Activated CD4-positive, alpha-beta T cell treated with anti-CD3 and anti-CD28 coated beads, Interleukin-2, amount 10 ng/mL, durations not matched to agents 7 days and 5 days (primary cell): ENCODE measurements at regions of chr19 and their contacts with region 1.

Region 1: GRCh38 chr19:17282488-17283255 is 971 bp downstream of the ANKLE1 start:
- DNase-seq: peak; percentile 79
- H3K4me3 Mint-ChIP-seq: peak overlapping the region; percentile 72
- H3K27ac Mint-ChIP-seq: no peak overlapping the region
- H3K4me1 Mint-ChIP-seq: peaks cover 13% of the 10 kb centered on the region
- H3K27me3 Mint-ChIP-seq: peaks cover 2% of the 10 kb centered on the region

Region 2: DNA sequence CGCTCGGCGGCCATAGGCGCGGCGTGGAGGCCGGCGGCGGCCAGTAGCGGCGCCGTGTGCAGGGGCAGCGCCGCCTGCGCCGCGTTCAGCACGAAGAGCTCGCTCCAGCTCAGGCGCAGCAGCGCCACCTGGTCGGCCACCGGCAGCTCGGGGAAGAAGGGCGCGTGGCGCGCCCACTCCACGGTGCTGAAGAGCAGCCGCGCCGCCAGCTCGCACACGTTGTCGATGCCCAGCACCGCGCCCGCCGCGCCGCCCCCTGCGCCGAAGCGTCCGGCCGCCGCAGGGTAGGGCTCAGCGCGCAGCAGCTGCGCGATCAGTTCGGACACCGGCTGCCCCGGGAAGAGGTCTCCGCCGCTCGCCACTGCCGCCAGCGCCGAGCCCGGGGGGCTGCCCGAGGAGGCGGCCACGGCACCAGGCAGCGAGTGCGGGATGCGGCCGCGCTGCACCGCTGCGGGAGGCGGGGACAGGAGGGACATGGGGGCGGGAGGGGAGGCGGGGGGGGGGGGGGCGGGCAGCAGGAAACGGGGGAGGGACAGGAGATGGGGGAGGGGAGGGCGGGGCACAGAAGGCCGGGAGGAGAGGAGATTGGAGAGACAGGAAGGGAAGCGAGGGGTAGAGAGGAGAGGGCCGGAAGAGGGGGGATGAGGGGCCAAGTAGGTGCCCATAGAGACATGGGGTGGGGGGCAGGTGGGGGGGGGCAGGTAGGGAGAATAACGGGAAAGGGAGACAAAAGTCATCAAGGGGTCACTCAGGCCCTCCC is 46.9 kb before region 1 on chr19:
- CTCF ChIA-PET with region 1: interaction called, 12 read pairs
- POLR2A ChIA-PET with region 1: interaction called, 6 read pairs
- DNase-seq: peak; percentile 77
- H3K4me3 Mint-ChIP-seq: peak overlapping the region; percentile 76
- H3K27ac Mint-ChIP-seq: peak overlapping the region; percentile 80
- H3K4me1 Mint-ChIP-seq: peaks cover 17% of the 10 kb centered on the region
- H3K27me3 Mint-ChIP-seq: no peaks in the 10 kb centered on the region

Region 3: GRCh38 chr19:17260842-17261325 is 21.8 kb before region 1 on chr19:
- CTCF ChIA-PET with region 1: interaction called, 10 read pairs
- POLR2A ChIA-PET with region 1: no interaction called
- DNase-seq: peak; percentile 93
- H3K4me3 Mint-ChIP-seq: no peak overlapping the region
- H3K27ac Mint-ChIP-seq: no peak overlapping the region
- H3K4me1 Mint-ChIP-seq: peaks cover 17% of the 10 kb centered on the region
- H3K27me3 Mint-ChIP-seq: no peaks in the 10 kb centered on the region

Region 4: DNA sequence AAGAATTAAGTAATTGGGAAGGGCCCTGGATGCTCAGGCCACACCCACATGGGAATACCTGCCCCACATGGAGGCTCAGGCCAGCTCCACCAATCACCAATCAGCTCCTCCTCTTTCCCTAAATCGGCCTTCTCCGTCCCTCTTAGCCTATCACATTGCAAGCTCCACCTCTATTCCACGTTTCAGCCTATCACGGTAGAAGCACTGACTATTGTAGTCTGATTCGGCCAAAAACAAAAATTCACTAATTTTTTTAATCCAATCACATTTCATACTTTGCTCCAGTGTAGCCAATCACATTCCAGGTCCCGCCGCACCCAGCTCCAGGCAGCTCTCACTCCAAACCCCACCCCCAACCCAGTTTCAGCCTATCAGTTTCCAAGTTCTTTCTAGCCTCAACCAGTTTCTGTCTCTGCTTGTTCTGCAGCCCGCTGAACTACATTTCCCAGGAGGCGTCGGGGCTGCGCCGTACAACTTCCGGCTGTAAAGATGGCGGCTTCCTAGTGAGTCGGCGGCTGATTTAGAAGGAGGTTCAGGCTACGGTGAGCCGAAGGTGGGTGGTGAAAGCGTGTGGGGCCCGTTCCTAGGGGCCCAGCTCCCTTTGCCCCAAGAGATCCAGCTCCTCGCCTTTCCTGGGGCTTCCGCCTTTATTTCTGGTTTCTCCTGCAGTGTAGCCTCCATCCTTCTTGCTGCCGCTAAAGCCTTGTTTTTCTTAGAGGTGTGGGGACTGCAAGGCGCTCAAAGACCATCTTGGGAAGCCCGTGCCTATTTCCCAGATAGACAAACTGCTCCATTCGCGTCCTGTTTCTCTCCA is 15.5 kb before region 1 on chr19 and contains the start of gene BABAM1:
- CTCF ChIA-PET with region 1: interaction called, 16 read pairs
- POLR2A ChIA-PET with region 1: interaction called, 3 read pairs
- DNase-seq: peak; percentile 99
- H3K4me3 Mint-ChIP-seq: peak within 1 kb of the TSS; percentile 80
- H3K27ac Mint-ChIP-seq: peak within 1 kb of the TSS; percentile 79
- H3K4me1 Mint-ChIP-seq: peaks cover 27% of the 10 kb centered on the region
- H3K27me3 Mint-ChIP-seq: no peaks in the 10 kb centered on the region
- total RNA-seq, gene BABAM1: 111 to 113 TPM